ENCODE measurements at regions of chr19 and their contacts with region 1.

Region 1: GRCh38 chr19:50329146-50329925 is at the start of gene KCNC3:
- DNase-seq: peak; percentile 99 to 100
- ATAC-seq: peak; percentile 84 to 87 (median 86)
- H3K4me3 ChIP-seq: peak within 1 kb of the TSS; percentile 65
- H3K27ac ChIP-seq: peak within 1 kb of the TSS; percentile 65
- H3K4me1 ChIP-seq: peaks cover 12% of the 10 kb centered on the region
- H3K27me3 ChIP-seq: peaks cover 0 to 19% (median 12%) of the 10 kb centered on the region in 3 donors
- CTCF ChIP-seq: no peak
- total RNA-seq, gene KCNC3: 0.65 to 2.4 (median 1.5) TPM

Region 2: DNA sequence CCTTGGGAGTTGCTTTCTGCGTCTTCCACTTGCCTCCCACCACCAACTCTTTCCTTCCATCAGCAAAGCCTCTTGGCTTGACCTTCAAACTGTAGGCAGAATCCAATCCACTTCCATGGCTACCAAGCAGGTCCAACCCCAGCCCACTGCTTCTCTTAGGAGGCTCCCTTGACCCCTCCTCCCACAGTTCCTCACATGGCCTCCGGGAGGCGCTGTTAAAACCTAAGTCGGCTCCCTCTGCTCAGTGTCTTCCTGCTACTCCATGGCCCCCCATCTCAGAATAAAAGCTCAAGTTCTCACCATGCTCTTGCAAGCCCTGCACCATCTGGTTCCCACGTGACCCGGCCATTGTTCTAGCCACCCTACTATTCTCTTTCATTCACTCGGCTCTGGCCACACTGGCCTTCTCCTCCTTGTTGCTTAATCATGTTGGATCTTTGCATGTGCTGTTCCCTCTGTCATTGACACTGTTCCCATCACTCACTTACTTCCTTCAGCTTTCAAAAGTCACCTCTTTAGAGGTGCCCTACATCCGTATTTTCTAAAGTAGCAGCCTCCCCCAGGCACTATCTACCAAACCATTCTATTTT is 173.7 kb before region 1 on chr19:
- intact Hi-C with region 1: loop called in 1 of 2 experiments (anchors 10 kb)
- DNase-seq: no peak
- ATAC-seq: no peak
- H3K4me3 ChIP-seq: no peak overlapping the region
- H3K27ac ChIP-seq: no peak overlapping the region
- H3K4me1 ChIP-seq: no peaks in the 10 kb centered on the region
- H3K27me3 ChIP-seq: peaks cover 0 to 6% (median 0%) of the 10 kb centered on the region in 3 donors
- CTCF ChIP-seq: no peak